K562 (cell line): ENCODE measurements at regions of chr1 and their contacts with region 1.

Region 1: DNA sequence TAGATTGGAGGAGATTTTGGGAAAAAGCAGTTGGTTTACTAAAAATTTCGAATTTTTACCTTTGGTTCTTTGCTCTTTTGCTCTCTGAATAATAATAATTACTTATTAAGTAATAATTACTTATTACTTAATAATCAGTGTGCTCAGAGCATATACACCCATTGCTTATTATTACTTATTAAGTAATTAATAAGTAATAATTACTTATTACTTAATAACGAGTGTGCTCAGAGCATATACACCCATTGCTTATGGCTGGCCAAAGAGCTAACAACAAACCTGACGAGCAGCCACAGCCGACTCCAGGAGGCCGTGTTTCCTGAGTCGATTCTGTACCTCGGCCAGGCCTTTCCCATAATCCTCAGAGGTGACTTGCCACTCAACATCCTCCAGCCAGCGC is 20.5 kb downstream of the SPTA1 start:
- DNase-seq: no peak
- ATAC-seq: no peak
- H3K4me3 ChIP-seq: no peak overlapping the region
- H3K27ac ChIP-seq: no peak overlapping the region
- H3K4me1 ChIP-seq: no peaks in the 10 kb centered on the region
- H3K27me3 ChIP-seq: no peaks in the 10 kb centered on the region
- CTCF ChIP-seq: no peak
- EP300 ChIP-seq: no peak
- POLR2A ChIP-seq: no peak
- RAD21 ChIP-seq: no peak

Region 2: DNA sequence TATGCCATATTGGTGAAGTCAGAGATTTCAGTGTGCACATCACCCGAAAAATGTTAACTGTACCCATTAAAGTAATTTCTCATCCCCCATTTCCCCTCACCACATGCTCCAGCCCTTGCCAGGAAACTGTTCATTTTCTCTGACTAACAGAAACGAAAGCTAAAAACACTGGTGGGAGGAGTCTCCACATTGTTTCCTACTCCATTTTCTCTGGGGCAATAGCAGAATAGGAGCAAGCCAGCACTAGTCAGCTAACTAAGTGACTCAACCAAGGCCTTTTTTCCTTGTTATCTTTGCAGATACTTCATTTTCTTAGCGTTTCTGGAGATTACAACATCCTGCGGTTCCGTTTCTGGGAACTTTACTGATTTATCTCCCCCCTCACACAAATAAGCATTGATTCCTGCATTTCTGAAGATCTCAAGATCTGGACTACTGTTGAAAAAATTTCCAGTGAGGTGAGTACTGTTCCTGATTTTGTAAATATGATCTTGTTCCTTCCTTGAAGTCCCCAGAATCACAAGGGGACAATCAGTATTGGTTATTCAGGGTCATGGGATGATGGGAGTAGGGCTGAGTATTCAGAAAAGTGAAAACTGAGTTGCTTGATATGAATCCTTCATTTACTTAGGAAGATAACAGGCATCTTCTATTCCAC is 343.8 kb after region 1 on chr1 and contains the start of gene IFI16:
- CTCF ChIA-PET with region 1: no interaction called
- POLR2A ChIA-PET with region 1: no interaction called
- in situ Hi-C with region 1: loop called (anchors 10 kb)
- intact Hi-C with region 1: no loop called
- DNase-seq: peak in 2 of 4 experiments; percentile 17 to 51
- ATAC-seq: peak; percentile 78
- H3K4me3 ChIP-seq: no peak within 1 kb of the TSS
- H3K27ac ChIP-seq: no peak within 1 kb of the TSS
- H3K4me1 ChIP-seq: no peaks in the 10 kb centered on the region; a peak in 2 of 5 replicates
- H3K27me3 ChIP-seq: no peaks in the 10 kb centered on the region
- CTCF ChIP-seq: no peak
- EP300 ChIP-seq: peak; percentile 83
- POLR2A ChIP-seq: no peak
- RAD21 ChIP-seq: 0 out of 4 replicates have a peak, but pooled peaks of 1 of the 2 experiments have one; percentile 2
- polyA plus RNA-seq, gene IFI16: 1.7 to 2.8 TPM